ENCODE measurements at regions of chr21 and their contacts with region 1.

Region 1: GRCh38 chr21:15071009-15071408 is 6.2 kb upstream of the NRIP1 start:
- DNase-seq: no peak
- ATAC-seq: no peak
- H3K4me3 ChIP-seq: no peak overlapping the region
- H3K27ac ChIP-seq: no peak overlapping the region
- H3K4me1 ChIP-seq: peaks cover 0 to 5% (median 0%) of the 10 kb centered on the region in 3 donors
- H3K27me3 ChIP-seq: no peaks in the 10 kb centered on the region
- CTCF ChIP-seq: no peak

Region 2: GRCh38 chr21:14567331-14568279 is 503.4 kb before region 1 on chr21:
- intact Hi-C with region 1: no loop called
- DNase-seq: no peak
- ATAC-seq: no peak
- H3K4me3 ChIP-seq: no peak overlapping the region
- H3K27ac ChIP-seq: no peak overlapping the region
- H3K4me1 ChIP-seq: no peaks in the 10 kb centered on the region
- H3K27me3 ChIP-seq: no peaks in the 10 kb centered on the region
- CTCF ChIP-seq: no peak

Region 3: DNA sequence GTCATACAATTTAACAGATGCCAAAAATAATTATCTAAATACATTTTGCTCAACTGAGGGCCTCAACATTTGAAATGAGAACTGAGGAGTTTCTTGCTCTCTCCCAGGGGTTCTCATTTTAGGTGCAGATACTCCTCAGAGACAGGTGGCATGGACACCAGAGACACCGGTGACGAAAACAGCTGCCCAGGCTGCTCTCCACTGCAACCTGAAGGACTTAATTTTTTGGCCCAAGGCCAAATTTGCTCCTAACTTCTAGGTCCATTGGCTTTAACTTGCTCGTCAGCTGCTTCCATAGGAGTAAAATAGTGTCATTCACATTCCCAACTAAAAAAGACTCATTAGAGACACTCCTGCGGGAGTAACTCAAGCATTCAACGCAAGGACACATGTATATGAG is 93.2 kb before region 1 on chr21:
- intact Hi-C with region 1: no loop called
- DNase-seq: no peak
- ATAC-seq: peak in 1 of 4 donors; percentile 55
- H3K4me3 ChIP-seq: no peak overlapping the region
- H3K27ac ChIP-seq: no peak overlapping the region
- H3K4me1 ChIP-seq: peaks cover 0 to 12% (median 11%) of the 10 kb centered on the region in 3 donors
- H3K27me3 ChIP-seq: no peaks in the 10 kb centered on the region
- CTCF ChIP-seq: no peak

Region 4: DNA sequence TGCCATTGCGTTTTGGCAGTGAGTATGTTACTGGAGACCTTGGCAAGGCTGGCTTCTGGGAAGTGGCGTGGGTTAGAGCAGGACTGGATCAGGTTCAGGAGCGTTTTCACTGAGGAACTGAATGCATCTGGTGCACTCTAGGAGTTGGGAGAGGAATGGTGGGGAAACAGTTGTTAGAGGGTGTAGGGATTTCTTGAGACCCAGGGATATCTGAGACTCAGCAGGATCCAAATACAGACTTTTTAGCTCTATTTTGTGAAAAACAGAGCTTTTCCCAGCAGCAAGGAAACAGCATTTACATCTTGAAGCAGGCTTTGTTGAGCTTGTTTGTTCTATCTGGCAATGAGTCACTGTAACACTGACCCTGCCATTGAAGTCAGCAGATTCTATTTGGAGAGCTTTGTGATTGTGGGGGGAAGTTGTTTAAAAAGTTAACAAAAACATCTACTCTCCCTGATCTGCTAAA is 50.7 kb after region 1 on chr21:
- intact Hi-C with region 1: loop called in 1 of 3 experiments (anchors 10 kb)
- DNase-seq: peak; percentile 38 to 85 (median 75)
- ATAC-seq: peak; percentile 91 to 95 (median 93)
- H3K4me3 ChIP-seq: peak overlapping the region in 2 of 4 donors; percentile 3 to 6
- H3K27ac ChIP-seq: peak overlapping the region; percentile 67 to 83 (median 72)
- H3K4me1 ChIP-seq: peaks cover 14 to 21% (median 17%) of the 10 kb centered on the region in 3 donors
- H3K27me3 ChIP-seq: no peaks in the 10 kb centered on the region
- CTCF ChIP-seq: no peak

Region 5: DNA sequence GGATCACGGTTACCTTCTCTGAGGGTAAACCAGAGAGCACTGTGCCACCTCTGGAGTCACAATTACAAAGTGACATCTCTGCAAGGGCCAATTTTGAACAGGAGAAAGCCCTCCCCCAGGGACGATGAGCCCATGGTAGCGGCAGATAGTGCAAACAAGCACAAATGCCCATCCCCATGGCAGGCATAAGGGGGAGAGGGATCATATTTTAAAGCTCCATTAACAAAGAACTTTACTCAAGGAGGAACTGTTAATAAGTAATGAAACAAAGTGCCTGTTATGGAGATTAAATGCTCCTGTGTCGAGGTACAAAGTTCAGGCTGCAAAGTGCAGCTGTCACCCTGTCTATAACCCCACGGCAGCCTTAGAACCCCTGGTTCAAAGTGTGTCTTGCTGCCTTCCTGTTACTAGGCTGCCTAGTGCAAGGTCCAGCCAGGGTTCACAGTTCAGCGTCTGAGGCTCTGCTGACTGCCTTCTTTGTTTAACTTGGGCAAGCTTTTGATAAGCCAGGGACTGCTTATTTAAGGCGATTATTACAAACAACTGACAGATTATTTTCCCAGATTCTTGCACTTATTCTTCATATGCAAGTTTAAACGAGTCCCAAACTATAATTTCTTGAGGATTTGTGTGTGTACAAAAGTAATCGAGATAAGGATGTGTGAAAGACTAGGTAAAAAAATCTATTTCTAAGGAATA is 69.5 kb after region 1 on chr21:
- intact Hi-C with region 1: loop called in 1 of 3 experiments (anchors 10 kb)
- DNase-seq: peak; percentile 60 to 92 (median 85)
- ATAC-seq: peak; percentile 92 to 95 (median 94)
- H3K4me3 ChIP-seq: peak overlapping the region in 2 of 4 donors; percentile 19 to 22
- H3K27ac ChIP-seq: peak overlapping the region; percentile 63 to 86 (median 78)
- H3K4me1 ChIP-seq: peaks cover 23 to 39% (median 33%) of the 10 kb centered on the region in 3 donors
- H3K27me3 ChIP-seq: no peaks in the 10 kb centered on the region
- CTCF ChIP-seq: no peak